Tibial artery (tissue), 4 donors: ENCODE measurements at regions of chr9 and their contacts with region 1.

Region 1: DNA sequence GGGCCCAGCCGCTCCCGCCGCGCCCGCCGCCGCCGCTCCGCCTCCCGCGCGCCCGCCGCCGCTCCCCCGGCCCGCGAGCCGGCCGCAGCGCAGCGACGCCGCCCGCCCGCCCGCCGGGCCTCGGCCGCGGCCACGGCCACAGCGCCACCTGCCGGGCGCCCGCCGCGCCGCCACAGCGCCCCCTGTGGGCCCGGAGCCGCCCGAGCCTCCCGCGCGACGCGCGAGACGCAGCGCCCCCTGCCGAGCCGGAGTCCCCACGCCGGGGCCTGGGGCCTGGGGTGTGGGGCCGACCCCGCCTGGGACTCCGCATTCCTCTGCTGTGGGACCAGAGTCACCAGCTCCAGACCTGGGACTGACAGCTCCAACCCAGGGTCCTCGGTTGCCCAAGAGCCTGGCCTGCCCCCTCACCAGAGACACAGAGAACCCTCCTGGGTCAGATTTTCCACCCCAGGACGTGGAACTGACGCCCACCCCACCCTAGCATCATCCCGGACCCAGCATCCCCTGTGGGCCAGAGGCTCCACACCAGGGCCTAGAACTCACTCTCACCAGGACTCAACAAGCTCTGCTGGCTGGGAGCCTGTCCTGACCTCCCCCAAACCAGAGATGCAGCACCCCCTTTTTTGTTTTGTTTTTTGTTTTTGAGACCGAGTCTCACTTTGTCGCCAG is at the start of gene RAPGEF1:
- DNase-seq: peak in 1 of 2 donors; percentile 82
- H3K4me3 ChIP-seq: peak within 1 kb of the TSS; percentile 64 to 74
- H3K27ac ChIP-seq: peak within 1 kb of the TSS; percentile 69 to 86
- H3K4me1 ChIP-seq: peaks cover 0 to 38% (median 30%) of the 10 kb centered on the region in 4 donors
- H3K27me3 ChIP-seq: no peaks in the 10 kb centered on the region
- CTCF ChIP-seq: peak; percentile 78 to 100

Region 2: DNA sequence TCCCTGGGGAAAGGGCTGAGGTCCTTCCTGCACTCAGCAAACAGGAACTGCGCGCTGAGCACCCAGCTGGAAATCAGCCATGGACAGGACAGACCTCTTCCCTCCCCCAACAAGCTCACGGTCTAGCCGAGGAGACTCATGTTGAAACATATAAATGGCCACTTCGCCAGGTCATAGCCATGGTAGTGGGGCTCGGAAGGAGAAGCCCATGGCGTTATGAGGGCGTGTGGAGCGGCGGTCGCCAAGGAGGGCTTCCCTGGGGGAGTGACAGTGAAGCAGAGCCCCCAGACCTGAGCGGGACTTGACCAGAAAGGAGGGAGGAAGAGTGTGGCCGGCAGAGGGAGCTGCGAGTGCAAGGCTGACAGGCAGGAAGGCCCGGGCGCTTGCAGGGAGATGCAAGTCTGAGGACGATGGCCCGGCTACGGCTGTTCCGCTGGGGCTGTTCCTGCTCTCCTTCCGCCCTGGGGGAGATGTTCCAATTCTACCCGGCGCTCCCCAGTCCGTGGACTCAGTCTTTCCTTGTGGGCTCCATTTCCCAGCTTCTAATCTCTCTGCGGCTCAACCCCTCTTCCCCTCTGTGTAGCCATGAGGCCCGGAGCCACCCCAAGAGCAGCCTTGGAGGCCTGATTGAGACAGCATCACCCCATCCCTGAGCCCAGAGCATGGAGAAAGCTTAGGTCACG is 390.1 kb before region 1 on chr9:
- intact Hi-C with region 1: loop called (anchors 10 kb)
- DNase-seq: peak; percentile 90 to 91
- H3K4me3 ChIP-seq: peak overlapping the region in 1 of 2 donors; percentile 28
- H3K27ac ChIP-seq: no peak overlapping the region
- H3K4me1 ChIP-seq: peaks cover 0 to 11% (median 9%) of the 10 kb centered on the region in 4 donors
- H3K27me3 ChIP-seq: peaks cover 0 to 23% of the 10 kb centered on the region in 2 donors
- CTCF ChIP-seq: peak; percentile 87 to 88

Region 3: GRCh38 chr9:131447148-131447547 is 293.0 kb before region 1 on chr9:
- intact Hi-C with region 1: no loop called
- DNase-seq: peak in 1 of 2 donors; percentile 33
- H3K4me3 ChIP-seq: no peak overlapping the region
- H3K27ac ChIP-seq: no peak overlapping the region
- H3K4me1 ChIP-seq: no peaks in the 10 kb centered on the region
- H3K27me3 ChIP-seq: no peaks in the 10 kb centered on the region
- CTCF ChIP-seq: no peak

Region 4: GRCh38 chr9:131590908-131591844 is 148.9 kb before region 1 on chr9:
- intact Hi-C with region 1: loop called (anchors 2 kb)
- DNase-seq: peak; percentile 76 to 85
- H3K4me3 ChIP-seq: no peak overlapping the region
- H3K27ac ChIP-seq: no peak overlapping the region
- H3K4me1 ChIP-seq: peaks cover 0 to 10% (median 0%) of the 10 kb centered on the region in 4 donors
- H3K27me3 ChIP-seq: no peaks in the 10 kb centered on the region
- CTCF ChIP-seq: peak; percentile 83 to 98

Region 5: DNA sequence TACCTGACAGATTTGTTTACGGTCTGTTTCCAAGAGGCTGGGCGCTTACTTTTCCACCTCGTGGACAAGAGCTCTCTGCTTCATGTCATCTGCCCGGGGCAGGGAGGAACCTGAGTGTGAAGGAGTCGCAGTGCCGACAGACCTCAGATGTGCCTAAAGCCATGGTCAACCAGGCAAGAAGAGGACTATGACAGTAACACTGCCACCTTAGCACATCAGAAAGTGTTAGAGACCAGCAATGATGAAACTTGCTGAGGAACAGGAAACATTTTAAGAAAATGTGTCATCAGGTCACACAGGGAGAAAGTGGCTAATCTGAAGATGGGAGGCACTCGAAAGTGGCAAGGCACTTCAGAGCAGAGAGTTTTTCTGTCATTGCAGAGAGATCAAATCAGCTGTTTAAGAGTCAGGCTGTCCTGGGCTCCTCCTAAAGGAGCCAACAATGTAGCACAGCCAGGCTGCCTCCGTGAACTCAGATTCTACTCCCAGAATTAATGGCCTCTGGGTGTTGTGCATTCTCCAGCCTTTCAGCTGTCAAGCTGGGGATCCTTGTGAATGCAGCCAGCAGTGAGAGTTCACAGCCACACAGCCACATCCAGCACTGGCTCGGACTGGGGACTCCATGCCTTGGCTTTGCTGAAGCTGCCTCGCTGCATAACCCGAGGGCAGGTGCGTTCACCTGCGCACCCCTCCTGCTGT is 94.9 kb before region 1 on chr9:
- intact Hi-C with region 1: loop called (anchors 5 kb)
- DNase-seq: peak in 1 of 2 donors; percentile 5
- H3K4me3 ChIP-seq: no peak overlapping the region
- H3K27ac ChIP-seq: no peak overlapping the region
- H3K4me1 ChIP-seq: peaks cover 0 to 39% (median 27%) of the 10 kb centered on the region in 4 donors
- H3K27me3 ChIP-seq: no peaks in the 10 kb centered on the region
- CTCF ChIP-seq: no peak

Region 6: DNA sequence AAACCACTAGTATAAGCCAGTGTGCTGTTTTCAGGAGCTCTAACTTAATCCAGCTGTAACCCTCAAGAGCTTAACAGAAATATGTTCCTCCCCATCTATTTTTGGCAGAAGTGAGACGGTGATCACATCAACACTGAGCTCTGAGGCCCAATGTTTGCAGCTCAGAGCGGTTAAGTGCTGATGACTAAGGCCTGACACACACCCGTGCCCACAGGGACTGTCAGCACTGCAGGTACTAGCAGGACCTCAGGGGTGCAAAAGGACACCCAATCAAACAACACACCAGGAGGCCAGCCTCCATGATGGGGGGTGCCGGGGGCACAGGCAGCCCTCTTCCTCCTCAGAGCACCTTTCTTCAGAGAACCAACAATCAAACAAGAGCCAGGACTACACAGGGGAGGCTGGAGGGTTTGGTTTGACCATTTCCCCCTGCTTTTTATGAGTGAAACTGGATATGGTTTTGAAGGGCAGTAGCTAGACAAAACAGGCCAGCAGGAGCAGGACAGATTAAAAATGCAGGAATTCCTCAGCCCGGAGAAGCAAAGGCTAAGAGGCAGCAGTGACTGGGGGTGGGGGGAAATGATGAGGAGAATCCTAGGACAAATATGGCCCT is 61.5 kb before region 1 on chr9:
- intact Hi-C with region 1: loop called (anchors 10 kb)
- DNase-seq: peak; percentile 87 to 91
- H3K4me3 ChIP-seq: no peak overlapping the region
- H3K27ac ChIP-seq: peak overlapping the region; percentile 88 to 89
- H3K4me1 ChIP-seq: peaks cover 21 to 92% (median 79%) of the 10 kb centered on the region in 4 donors
- H3K27me3 ChIP-seq: no peaks in the 10 kb centered on the region
- CTCF ChIP-seq: no peak